ENCODE measurements at regions of chr1 and their contacts with region 1.

Region 1: DNA sequence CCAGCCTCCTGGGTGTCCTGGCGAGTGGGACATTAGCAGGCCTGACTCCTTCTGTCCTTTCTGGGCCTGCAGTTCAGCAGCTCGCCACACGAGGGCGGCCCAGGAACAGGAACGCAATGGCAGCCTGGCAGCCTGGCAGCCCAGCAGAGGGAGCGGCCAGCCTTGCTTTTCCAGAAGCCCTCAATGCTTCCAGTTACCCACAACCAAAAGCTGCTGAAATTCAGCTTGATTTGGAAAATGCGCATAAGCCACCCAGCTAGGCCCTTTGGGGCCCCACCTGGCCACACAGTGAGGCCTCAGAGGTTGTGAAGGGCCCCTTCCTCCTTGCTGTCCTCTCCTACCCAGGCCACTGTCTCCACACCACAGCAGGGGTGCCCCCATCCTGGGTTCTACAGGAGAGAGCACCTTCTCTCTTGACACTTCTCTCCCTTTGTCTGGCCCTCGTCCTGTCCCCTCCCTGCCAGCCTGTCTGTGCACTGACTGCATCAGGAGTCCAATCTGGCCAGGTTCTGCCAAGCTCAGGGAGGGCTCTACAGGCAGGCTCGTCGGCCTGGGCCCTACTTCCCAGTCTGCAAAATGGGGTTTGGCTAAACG is 103.4 kb upstream of the VAMP3 start:
- DNase-seq: peak; percentile 82
- H3K4me3 Mint-ChIP-seq: no peak overlapping the region
- H3K27ac Mint-ChIP-seq: peak overlapping the region; percentile 32
- H3K4me1 Mint-ChIP-seq: no peaks in the 10 kb centered on the region
- H3K27me3 Mint-ChIP-seq: no peaks in the 10 kb centered on the region
- CTCF ChIP-seq: peak; percentile 99

Region 2: DNA sequence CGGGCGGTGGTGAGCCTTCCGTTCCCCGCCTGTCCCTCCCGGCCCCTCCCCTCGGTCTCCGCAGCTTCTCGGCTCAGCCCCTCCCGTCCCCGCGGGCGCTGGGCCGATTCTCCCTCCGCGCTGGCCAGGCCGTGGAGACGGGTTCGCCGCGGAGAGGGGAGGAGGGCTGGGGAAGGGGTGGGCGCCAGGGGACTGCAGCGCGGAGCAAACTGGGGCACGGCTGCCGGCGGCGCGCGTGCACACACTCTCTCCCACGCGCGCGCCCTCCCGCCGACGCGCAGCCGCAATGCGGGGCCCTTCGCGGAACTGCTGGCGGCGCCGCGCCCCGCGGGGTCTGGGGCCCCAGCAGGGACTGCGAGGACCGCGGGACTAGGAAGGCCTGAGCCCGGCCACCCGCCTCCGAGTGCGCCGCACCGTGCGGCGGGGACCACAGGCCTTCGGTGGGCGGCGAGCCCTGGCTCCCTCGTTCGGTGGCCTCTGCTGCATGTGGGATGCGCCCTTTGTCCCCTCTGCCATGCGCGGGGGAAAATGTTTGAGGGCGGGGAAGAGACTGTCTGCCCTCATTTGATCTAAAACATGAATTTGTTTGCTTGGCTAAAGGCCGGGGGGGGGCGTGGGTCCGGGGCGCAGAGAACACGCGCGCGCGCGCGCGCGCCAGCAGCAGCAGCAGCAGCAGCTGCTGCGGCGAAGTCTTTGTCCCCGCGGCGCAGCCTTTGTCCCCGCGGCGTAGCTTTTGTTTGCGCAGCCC is 12.7 kb after region 1 on chr1:
- CTCF ChIA-PET with region 1: interaction called, 65 read pairs
- POLR2A ChIA-PET with region 1: no interaction called
- intact Hi-C with region 1: no loop called
- DNase-seq: no peak
- H3K4me3 Mint-ChIP-seq: peak overlapping the region; percentile 61
- H3K27ac Mint-ChIP-seq: no peak overlapping the region
- H3K4me1 Mint-ChIP-seq: no peaks in the 10 kb centered on the region
- H3K27me3 Mint-ChIP-seq: peaks cover 17% of the 10 kb centered on the region
- CTCF ChIP-seq: no peak

Region 3: DNA sequence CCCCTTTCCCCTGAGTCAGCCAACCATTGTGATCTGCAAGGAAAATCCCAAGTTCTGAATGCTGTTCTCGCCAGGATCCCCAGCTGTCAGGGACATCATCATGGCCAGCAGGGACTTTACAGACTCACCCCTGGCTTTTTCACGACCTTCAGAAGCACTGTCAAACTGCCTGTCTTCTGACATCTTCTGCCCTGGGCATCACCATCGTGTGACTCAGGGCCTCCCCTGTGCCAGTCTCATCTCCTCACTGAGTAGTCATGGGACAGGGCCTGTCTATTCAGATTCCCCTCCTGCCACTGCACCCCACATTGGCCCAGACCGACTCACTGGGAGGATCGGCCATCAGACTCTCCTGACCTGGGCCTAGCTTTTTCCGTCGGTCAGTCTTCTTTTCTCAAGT is 30.9 kb after region 1 on chr1:
- CTCF ChIA-PET with region 1: interaction called, 25 read pairs
- POLR2A ChIA-PET with region 1: no interaction called
- intact Hi-C with region 1: no loop called
- DNase-seq: no peak
- H3K4me3 Mint-ChIP-seq: no peak overlapping the region
- H3K27ac Mint-ChIP-seq: no peak overlapping the region
- H3K4me1 Mint-ChIP-seq: no peaks in the 10 kb centered on the region
- H3K27me3 Mint-ChIP-seq: peaks cover 19% of the 10 kb centered on the region
- CTCF ChIP-seq: no peak

Region 4: DNA sequence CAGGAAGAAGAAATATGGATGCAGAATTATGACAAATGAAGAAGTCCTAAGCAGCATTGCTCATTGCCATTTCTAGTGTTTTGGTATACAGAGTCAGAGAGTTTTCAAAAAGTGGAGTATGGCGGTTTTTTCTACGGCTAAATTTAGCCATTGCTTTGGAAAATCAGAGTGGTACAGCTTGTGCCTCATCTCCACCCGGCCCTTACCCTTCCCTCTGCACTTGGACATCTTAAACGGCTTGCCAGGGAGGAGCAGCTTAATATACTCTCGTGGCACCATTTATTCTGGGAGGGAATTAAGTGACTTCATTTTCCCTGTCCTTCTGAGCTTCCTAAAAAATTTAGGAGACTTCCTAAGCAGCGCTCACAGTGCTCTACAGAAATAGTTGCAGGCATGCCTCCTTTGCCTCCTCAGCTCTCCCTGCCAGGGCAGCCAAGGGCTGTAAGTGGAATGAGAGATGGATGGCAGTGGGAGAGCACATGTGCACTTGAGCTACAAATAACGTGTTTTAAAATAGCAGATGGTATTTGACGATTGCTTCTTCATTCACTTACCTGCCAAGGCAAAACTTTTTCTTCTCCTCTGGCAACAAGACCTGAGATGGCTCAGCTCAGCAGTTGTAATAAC is 51.9 kb after region 1 on chr1:
- CTCF ChIA-PET with region 1: interaction called, 20 read pairs
- POLR2A ChIA-PET with region 1: no interaction called
- intact Hi-C with region 1: no loop called
- DNase-seq: no peak
- H3K4me3 Mint-ChIP-seq: no peak overlapping the region
- H3K27ac Mint-ChIP-seq: no peak overlapping the region
- H3K4me1 Mint-ChIP-seq: no peaks in the 10 kb centered on the region
- H3K27me3 Mint-ChIP-seq: peaks cover 46% of the 10 kb centered on the region
- CTCF ChIP-seq: no peak

Region 5: GRCh38 chr1:7752512-7753417 is 85.0 kb after region 1 on chr1:
- CTCF ChIA-PET with region 1: interaction called, 646 read pairs
- POLR2A ChIA-PET with region 1: interaction called, 23 read pairs
- intact Hi-C with region 1: loop called (anchors 1 kb)
- DNase-seq: peak; percentile 68
- H3K4me3 Mint-ChIP-seq: peak overlapping the region; percentile 50
- H3K27ac Mint-ChIP-seq: no peak overlapping the region
- H3K4me1 Mint-ChIP-seq: no peaks in the 10 kb centered on the region
- H3K27me3 Mint-ChIP-seq: peaks cover 11% of the 10 kb centered on the region
- CTCF ChIP-seq: peak; percentile 67

Region 6: GRCh38 chr1:7770997-7771822 is 103.5 kb after region 1 on chr1 and contains the start of gene VAMP3:
- CTCF ChIA-PET with region 1: interaction called, 24 read pairs
- POLR2A ChIA-PET with region 1: no interaction called
- intact Hi-C with region 1: no loop called
- DNase-seq: peak; percentile 76
- H3K4me3 Mint-ChIP-seq: peak within 1 kb of the TSS; percentile 84
- H3K27ac Mint-ChIP-seq: peak within 1 kb of the TSS; percentile 80
- H3K4me1 Mint-ChIP-seq: peaks cover 10% of the 10 kb centered on the region
- H3K27me3 Mint-ChIP-seq: peaks cover 40% of the 10 kb centered on the region
- CTCF ChIP-seq: no peak
- total RNA-seq, gene VAMP3: 58.6 and 79.6 TPM in 2 replicates

Measured in MCF 10A (cell line).